ENCODE measurements at regions of chr10 and their contacts with region 1.

Region 1: DNA sequence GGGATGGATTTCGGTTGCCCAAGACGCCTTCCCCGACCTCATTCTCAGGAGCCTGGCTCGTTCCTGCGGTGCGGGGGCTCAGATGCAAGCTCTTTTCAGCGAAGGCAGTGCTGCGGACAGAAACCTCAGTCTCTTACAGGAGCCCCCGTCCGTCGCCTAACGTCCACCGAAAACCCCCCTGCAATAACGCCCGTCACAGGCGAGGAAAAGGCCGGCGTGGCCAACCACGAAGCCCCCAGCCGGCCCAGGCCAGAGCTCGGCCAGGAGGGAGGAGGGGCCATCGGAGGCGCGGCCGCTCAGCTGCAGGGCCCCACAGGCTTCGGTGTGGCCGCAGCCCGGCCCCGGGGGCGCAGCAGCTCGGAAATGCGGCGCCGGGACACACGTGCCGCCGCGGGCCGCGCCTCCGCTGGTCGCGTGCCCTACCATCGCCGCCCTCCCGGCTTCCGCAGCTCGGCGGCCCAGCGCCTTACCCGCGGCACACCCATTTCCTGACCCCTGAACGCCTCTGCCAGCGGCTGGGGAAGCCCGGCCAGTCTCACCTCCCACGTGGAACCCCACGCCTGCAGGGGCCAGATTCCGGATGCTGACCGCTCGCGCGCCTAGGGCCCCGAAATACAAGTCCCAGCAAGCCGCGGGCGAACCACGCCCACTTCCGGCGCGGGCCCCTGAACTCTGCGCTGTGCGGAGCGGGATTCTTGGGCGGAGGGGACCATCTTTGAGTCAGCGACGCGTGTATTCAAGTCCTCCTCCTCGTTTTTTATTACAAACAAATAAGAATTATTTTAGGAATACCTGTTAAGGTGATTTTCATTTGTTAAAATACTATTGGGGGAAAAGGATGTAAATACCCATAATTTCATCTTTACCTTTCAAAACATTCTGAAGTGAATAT is at the start of gene ZNF239:
- DNase-seq: peak; percentile 83 to 93 (median 90)
- H3K4me3 ChIP-seq: peak within 1 kb of the TSS; percentile 55 to 89 (median 77)
- H3K27ac ChIP-seq: peak within 1 kb of the TSS in 50 of 59 donors; percentile 7 to 88 (median 58)
- H3K27me3 ChIP-seq: no peaks in the 10 kb centered on the region
- CTCF ChIP-seq: peak in 30 of 56 donors; percentile 9 to 55 (median 30)
- total RNA-seq, gene ZNF239: 3.7 to 10.3 (median 6.6) TPM

Region 2: GRCh38 chr10:42782446-42783180 is 791.6 kb before region 1 on chr10 and contains the start of gene BMS1:
- intact Hi-C with region 1: loop called in 1 of 2 experiments (anchors 5 kb)
- DNase-seq: peak; percentile 80 to 94 (median 92)
- H3K4me3 ChIP-seq: peak within 1 kb of the TSS; percentile 58 to 96 (median 81)
- H3K27ac ChIP-seq: peak within 1 kb of the TSS; percentile 81 to 99 (median 95)
- H3K27me3 ChIP-seq: peaks cover 0 to 2% (median 0%) of the 10 kb centered on the region in 45 donors
- CTCF ChIP-seq: peak in 28 of 56 donors; percentile 10 to 48 (median 25)
- total RNA-seq, gene BMS1: 9.9 to 20.8 (median 15.8) TPM

Region 3: DNA sequence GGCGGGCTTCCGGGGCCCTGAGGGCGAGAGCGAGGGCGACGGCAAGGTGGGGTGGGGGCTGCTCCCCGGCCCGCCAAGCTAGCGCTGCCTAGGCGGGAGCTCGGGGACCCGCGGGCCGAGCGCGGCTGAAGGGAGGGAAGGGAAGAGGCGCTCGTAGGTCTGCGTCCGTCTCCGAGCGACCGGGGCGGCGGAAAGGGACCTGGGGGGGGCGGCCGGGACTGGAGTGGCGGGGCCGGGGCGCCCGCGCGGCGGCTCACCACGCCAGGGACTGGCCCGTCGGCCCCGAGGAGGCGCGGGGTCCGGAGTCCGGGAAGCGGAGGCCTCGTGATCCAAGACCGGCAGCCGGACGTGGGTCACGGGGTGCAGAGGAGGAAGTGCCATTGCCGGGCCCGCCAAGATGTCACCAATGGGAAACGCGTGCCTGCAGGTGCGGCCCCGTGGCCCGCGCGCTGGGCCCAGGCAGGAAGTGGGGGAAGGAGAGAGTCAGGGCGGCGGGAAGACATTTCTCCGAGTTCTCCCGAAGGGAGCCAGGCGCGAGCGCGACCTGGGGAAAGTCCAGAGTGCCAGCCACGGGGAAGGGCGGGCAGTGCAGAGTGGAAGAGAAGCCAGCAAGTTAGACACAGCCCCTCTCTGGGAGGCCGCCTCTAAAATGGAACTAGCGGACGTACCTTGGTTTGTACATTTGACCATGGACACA is 177.2 kb before region 1 on chr10:
- intact Hi-C with region 1: loop called in 1 of 2 experiments (anchors 5 kb)
- DNase-seq: peak; percentile 75 to 90 (median 85)
- H3K4me3 ChIP-seq: peak overlapping the region; percentile 55 to 91 (median 80)
- H3K27ac ChIP-seq: peak overlapping the region; percentile 81 to 99 (median 97)
- H3K27me3 ChIP-seq: no peaks in the 10 kb centered on the region
- CTCF ChIP-seq: peak in 16 of 56 donors; percentile 7 to 38 (median 15)

Region 4: GRCh38 chr10:43606322-43607198 is 32.3 kb after region 1 on chr10 and contains the start of gene ZNF485:
- intact Hi-C with region 1: loop called (anchors 2 kb)
- DNase-seq: peak; percentile 70 to 89 (median 76)
- H3K4me3 ChIP-seq: peak within 1 kb of the TSS; percentile 69 to 99 (median 87)
- H3K27ac ChIP-seq: peak within 1 kb of the TSS in 52 of 59 donors; percentile 3 to 89 (median 68)
- H3K27me3 ChIP-seq: no peaks in the 10 kb centered on the region
- CTCF ChIP-seq: peak in 38 of 56 donors; percentile 7 to 59 (median 22)
- total RNA-seq, gene ZNF485: 2.6 to 9.9 (median 5.5) TPM

Region 5: DNA sequence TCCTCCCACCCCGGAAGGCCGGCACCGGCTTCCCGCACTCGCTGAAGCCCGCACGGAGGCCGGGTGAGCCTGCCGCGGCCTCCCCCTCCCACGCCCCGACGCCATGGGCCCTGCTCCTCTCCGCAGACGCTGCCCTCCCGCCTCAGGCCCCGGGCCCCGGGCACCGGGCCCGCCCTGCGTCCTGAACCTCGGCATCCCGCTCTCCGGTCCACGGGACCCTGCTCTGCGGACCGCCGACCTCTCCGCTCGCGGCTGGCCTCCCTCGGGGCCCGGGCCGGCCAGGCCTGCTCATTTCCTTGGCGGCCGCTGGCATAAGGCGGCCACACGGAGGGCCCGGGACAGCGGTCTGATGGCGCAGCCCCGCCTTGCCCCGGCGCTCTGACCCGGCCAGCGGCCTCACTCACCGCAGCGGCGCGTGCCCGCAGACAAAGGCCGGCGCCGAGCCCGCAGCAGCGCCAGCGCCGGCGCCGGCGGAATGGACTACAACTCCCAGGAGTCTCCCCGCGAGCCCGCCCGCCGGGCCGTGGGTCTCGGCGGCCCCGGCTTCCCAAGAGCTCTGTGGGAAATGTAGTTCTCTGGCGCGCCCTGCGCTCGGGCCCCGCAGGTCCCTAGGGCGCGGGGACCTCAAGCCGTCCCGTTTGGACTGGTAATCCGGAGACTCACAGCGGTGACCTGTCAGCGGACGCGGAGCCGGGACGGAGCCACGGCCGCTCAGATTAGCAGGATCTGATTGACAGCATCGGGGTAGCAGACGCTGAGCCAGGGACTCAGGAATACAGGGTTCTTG is 74.3 kb after region 1 on chr10 and contains the start of gene ZNF32:
- intact Hi-C with region 1: loop called (anchors 2 kb)
- DNase-seq: peak; percentile 77 to 94 (median 84)
- H3K4me3 ChIP-seq: peak within 1 kb of the TSS; percentile 66 to 99 (median 89)
- H3K27ac ChIP-seq: peak within 1 kb of the TSS in 58 of 59 donors; percentile 56 to 97 (median 89)
- H3K27me3 ChIP-seq: peaks cover 0 to 5% (median 0%) of the 10 kb centered on the region in 45 donors
- CTCF ChIP-seq: peak in 35 of 56 donors; percentile 3 to 58 (median 31)
- total RNA-seq, gene ZNF32: 30.7 to 64.7 (median 43.9) TPM